Body of pancreas (tissue), 4 donors: ENCODE measurements at regions of chr22 and their contacts with region 1.

Region 1: DNA sequence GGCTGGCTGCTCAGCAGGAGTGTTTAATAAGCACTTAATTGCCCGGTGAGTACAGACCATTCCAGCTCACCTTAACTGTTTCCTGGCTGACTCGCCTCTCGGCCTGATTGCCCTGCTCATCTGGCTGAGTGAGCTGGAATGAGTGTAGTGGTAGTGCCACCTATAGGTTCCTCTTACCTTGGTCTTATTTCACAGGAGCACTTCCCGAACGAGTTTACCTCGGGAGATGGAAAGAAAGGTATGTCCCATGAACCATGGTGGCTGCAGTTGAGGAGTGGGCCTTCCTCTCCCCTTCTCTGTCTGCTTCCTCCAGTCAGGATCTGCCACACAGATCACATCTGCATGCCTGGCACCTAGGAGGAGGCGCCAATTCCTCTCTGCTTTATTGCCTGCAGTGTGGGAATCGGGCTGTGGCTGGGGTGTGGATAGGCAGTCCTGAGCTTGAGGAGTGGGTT is 26.7 kb downstream of the UPB1 start:
- DNase-seq: peak; percentile 57 to 83 (median 76)
- ATAC-seq: peak; percentile 79
- H3K4me3 ChIP-seq: no peak overlapping the region
- H3K27ac ChIP-seq: peak overlapping the region in 2 of 4 donors; percentile 16 to 29
- H3K4me1 ChIP-seq: peaks cover 15% of the 10 kb centered on the region
- H3K27me3 ChIP-seq: no peaks in the 10 kb centered on the region
- CTCF ChIP-seq: peak in 6 of 7 experiments; percentile 40 to 83 (median 74)
- POLR2A ChIP-seq: no peak

Region 2: DNA sequence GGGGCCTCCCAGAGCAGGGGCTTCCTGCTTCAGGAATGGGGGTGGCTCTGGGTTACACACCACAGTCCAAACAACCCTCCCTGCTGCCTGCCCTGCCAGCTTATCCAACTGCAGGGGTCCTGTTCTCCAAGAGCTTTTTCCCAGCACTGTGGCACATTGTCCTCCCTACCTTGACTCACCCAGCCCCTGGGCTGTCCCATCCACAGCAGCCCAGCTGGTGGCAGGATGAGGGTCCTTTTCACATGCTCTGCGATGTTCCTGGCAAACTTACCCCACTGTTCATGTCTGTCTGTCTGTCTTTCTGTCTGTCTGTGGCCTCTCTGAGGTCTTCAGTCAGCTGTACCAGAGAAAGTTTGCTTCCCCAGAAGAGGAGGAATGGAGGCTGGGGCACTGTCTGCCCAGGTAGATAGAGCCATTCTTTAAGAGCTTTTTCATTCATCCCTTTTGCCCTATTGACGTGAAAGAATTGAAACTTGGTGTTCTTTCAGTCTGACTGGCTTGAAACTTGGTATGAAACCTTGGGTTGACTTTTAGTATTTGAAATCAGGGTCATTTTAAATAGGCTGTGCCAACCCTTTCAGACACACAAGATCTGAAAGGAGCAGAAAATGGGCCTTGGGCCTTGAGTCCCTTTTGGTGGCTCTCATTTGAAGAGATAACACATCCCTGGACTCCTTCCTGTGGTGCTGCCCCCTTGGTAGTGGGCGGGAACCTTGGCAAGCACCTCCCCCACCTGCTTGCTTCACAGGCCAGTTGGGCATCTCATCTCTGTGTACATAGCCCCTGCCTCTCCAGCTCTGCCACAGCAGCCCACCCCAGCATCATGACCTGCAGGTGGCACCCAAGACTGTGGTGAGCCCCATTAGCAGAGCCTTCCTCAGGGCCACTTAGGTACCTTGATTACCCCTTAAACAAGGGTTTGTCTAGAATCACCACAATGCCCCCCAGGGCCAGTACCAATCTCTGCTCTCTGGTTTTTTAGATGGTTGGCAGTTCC is 415.1 kb before region 1 on chr22:
- intact Hi-C with region 1: no loop called
- DNase-seq: no peak
- ATAC-seq: no peak
- H3K4me3 ChIP-seq: no peak overlapping the region
- H3K27ac ChIP-seq: no peak overlapping the region
- H3K4me1 ChIP-seq: no peaks in the 10 kb centered on the region
- H3K27me3 ChIP-seq: no peaks in the 10 kb centered on the region
- CTCF ChIP-seq: peak in 3 of 7 experiments; percentile 18 to 22 (median 19)
- POLR2A ChIP-seq: no peak

Region 3: GRCh38 chr22:24429411-24430365 is 92.1 kb before region 1 on chr22:
- intact Hi-C with region 1: loop called (anchors 5 kb)
- DNase-seq: peak in 1 of 4 donors; percentile 60
- ATAC-seq: no peak
- H3K4me3 ChIP-seq: no peak overlapping the region
- H3K27ac ChIP-seq: no peak overlapping the region
- H3K4me1 ChIP-seq: peaks cover 20% of the 10 kb centered on the region
- H3K27me3 ChIP-seq: peaks cover 0 to under 1% of the 10 kb centered on the region in 2 donors
- CTCF ChIP-seq: no peak
- POLR2A ChIP-seq: no peak